Activated T-helper 1 cell treated with anti-CD3 and anti-CD28 coated beads, Interleukin-12 subunit alpha, Interleukin-12 subunit beta, Interleukin-2, Interleukin-4 antibody, amounts not matched to agents 30 ng/mL and 10 ng/mL and 1 ng/mL, durations not matched to agents 14 hours and 24 hours and 36 hours (primary cell): ENCODE measurements at regions of chr5 and their contacts with region 1.

Region 1: DNA sequence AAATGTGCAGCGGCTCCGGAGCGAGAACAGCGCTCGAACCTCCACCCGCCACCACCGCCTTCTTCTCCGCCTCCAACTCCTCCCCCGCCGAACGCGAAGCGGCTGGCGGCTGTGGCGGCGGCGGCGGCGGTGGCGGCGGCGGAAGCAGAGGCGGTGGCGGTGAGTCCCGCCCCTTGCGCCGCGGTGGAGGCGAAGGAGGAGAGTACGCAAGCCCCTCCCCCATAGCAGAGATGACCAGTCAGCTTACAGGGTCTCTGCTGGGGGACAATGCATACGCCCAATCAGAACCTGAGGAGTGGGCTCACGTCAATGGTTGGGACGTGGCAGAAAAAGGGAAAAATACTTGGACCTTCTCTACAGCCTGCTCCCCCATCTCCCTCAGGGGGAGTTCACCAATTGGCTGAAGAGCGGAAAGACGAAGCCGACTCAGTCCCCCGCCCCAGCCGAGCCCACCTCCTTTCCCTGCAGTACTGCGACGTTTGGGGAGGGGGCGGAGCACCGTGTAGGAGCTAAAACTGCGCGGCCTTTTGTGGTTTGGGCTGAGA is at the start of gene PJA2:
- DNase-seq: peak; percentile 96
- H3K4me3 Mint-ChIP-seq: peak within 1 kb of the TSS; percentile 92
- H3K27ac Mint-ChIP-seq: peak within 1 kb of the TSS; percentile 97
- H3K4me1 Mint-ChIP-seq: peaks cover 57% of the 10 kb centered on the region
- H3K27me3 Mint-ChIP-seq: no peaks in the 10 kb centered on the region
- total RNA-seq, gene PJA2: 40.2 and 41.4 TPM in 2 replicates

Region 2: GRCh38 chr5:108748401-108749127 is 661.4 kb before region 1 on chr5:
- intact Hi-C with region 1: loop called (anchors 1 kb)
- DNase-seq: peak; percentile 95
- H3K4me3 Mint-ChIP-seq: peak overlapping the region; percentile 87
- H3K27ac Mint-ChIP-seq: peak overlapping the region; percentile 68
- H3K4me1 Mint-ChIP-seq: peaks cover 15% of the 10 kb centered on the region
- H3K27me3 Mint-ChIP-seq: peaks cover 30% of the 10 kb centered on the region

Region 3: DNA sequence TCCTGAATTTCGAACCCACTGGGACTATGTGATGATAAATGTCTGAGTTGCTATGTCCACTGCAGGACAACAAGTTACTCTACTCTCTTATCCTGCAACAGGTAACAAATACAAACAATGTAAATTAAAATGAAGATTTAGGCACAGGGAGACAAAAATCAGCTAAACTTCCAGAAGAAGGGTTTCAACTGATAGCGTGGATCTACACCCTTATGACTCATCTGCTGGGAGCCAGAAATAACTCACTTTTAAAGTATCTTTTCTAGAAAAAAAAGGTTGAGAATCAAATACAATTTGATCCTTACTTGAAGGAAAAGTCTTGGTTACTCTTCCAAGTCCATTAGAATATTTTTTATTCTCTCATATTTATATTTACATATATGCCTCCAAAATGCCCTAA is 21.5 kb before region 1 on chr5:
- intact Hi-C with region 1: no loop called
- DNase-seq: no peak
- H3K4me3 Mint-ChIP-seq: no peak overlapping the region
- H3K27ac Mint-ChIP-seq: no peak overlapping the region
- H3K4me1 Mint-ChIP-seq: peaks cover 31% of the 10 kb centered on the region
- H3K27me3 Mint-ChIP-seq: no peaks in the 10 kb centered on the region

Region 4: DNA sequence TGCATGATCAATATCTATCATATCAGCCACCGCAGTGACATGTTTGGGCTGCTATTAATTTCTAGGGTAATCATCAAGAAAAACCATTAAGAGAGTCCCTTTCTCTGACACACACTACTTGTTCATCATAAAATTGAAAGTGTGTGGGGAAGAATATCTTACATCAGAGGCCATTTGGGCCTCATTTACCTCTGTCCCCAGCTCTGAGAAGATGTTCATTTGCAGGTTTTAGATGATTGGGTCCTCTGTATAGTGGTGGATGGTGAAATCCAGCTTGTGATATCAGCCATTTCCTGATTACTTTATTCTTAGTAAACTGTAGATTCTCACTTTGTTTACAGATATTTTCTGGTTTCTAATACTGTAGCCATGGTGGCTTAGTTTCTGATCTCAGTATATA is 29.7 kb after region 1 on chr5:
- intact Hi-C with region 1: loop called (anchors 2 kb)
- DNase-seq: no peak
- H3K4me3 Mint-ChIP-seq: no peak overlapping the region
- H3K27ac Mint-ChIP-seq: no peak overlapping the region
- H3K4me1 Mint-ChIP-seq: no peaks in the 10 kb centered on the region
- H3K27me3 Mint-ChIP-seq: no peaks in the 10 kb centered on the region

Region 5: DNA sequence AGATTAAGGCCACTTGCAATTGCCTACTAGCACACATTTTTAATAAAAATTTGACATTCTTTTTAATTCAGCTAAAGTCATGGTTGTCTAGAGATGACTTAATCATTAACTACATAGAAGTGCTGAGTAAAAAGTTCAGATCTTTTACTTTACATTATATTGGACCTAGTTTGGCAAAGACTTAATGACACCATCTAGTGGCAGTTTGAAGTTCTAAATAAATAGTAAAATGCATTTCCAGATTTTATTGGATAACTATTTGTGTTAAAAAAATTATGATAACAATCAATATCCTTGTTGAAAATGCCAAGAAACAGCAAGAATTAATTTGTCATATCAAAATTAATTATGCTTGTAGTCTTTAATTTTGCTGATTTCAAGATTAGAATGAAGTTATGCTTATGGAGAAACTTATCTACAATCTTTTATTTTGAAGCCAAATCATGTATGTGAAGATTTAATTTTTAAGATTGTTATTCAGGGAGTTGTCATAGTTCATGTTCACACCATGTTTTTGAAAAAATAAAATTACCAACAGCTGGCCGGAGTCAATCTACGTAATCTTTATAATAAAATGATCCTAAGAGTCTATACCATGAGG is 69.4 kb after region 1 on chr5:
- intact Hi-C with region 1: no loop called
- DNase-seq: no peak
- H3K4me3 Mint-ChIP-seq: no peak overlapping the region
- H3K27ac Mint-ChIP-seq: no peak overlapping the region
- H3K4me1 Mint-ChIP-seq: no peaks in the 10 kb centered on the region
- H3K27me3 Mint-ChIP-seq: peaks cover 2% of the 10 kb centered on the region

Region 6: DNA sequence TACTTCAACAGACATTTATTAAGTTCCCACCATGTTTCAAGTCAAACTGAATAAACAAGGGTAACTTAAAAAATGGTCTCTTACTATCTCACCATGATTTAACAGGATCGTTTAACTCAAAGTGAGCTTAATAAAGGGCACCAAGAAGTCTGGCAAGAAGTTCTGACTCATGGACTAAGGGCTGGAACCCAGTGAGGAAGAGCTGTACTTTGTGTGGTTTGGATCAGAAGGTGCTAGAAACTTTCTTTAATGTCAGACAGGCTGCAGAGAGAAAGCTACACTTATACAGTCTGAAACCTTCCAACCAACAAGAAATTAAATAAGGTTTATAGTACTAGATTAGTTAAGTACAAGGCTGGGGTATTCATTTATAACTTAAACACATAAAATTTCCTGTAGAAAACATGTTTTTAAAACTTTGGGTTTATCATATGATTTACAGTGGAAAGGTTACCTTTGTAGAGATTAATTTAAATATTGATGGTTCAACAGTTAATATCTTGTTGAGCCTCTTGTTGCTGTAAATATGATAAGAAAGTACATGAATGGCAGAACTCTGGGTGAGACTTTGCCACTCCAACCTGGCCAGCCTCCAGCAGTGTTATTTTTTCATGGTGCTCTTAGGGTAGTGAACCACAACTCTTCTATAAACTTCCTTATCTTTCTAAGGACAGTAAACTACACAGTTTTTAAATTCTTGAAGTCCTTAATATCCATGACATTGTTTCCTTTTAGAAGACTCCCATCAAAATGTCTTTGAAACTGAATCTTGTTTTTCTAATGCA is 442.6 kb after region 1 on chr5:
- intact Hi-C with region 1: loop called (anchors 10 kb)
- DNase-seq: no peak
- H3K4me3 Mint-ChIP-seq: no peak overlapping the region
- H3K27ac Mint-ChIP-seq: no peak overlapping the region
- H3K4me1 Mint-ChIP-seq: peaks cover 56% of the 10 kb centered on the region
- H3K27me3 Mint-ChIP-seq: no peaks in the 10 kb centered on the region

Region 7: DNA sequence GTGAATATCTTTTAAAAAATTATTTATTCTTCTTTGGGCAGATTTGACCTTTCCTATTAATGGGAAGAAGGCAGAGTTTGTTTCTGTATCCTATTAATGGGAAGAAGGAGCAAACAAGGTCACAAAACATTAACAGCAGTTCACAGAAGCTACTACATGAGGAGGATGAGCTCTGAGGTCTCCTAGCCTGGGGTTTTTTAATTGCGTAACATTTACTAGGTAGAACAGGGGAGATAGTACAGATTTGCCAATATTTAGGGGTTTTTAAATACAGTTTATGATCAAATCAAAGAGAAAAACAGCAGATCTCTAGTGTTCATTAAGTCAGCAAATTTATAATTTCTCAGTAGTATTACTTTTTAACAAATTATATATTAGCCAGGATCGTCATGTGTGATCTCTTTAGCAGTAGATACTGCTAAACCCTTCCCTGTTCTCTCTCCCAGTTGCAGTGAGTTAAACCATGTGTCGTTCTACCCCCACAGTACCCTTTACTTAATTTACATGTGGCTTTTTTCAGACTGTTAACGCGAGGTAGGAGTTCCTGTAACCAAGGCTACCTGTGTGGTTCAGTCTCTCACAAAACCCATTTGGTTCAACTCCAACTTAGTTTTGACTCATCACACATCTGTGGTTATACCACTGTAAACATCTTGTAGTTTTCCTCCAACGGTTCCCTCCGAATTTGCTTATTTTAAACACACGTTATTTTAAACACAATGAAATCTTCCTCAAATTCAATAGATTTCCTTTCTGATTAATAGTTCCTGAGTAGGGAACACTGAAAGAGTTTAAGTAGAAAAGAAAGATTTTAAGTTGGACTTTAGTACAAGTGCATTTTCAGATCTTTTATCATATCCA is 1342.2 kb after region 1 on chr5:
- intact Hi-C with region 1: loop called (anchors 2 kb)
- DNase-seq: peak; percentile 52
- H3K4me3 Mint-ChIP-seq: peak overlapping the region; percentile 64
- H3K27ac Mint-ChIP-seq: peak overlapping the region; percentile 92
- H3K4me1 Mint-ChIP-seq: peaks cover 60% of the 10 kb centered on the region
- H3K27me3 Mint-ChIP-seq: no peaks in the 10 kb centered on the region